Cardiac septum (tissue), 1 donor: ENCODE measurements at regions of chr1 and their contacts with region 1.

Region 1: DNA sequence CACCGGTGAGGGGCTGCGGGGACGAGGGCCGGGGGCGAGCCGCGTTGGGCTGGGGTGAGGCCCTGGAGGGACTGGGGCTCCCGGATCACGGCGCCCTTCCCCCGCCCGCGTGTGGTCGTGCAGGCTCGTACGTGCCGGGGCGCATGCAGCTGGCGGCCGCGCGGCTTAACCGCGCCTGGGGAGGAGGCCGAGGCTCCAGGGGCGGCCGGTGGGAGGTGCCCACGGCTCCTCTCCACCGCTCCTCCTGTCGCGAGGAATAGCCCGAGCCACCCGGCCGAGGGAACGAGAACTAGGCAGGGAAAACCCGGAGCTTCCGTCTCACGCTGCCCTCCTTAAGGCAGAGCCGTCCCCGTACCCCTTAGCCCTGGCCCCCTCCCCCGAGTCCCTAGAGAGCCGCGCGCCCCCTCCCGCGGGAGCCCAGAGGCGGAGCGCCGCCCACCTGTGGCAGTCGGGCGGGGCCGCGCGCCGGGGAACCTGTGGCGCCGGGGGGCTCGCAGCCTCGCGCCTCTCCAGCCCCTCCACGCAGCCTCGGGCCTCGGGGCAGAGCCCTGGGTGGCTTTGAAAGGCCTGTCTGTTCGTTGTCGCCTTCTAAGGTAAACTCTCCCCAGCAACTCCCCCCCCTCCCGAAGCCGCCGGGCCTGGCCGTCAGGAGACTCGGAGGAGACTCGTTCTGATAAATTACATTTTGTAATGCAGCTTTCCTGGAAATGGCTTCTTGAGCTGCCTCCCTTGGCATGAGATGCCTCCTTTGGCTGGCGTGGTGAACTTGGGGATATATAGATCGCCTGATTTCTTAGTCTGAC is 746 bp downstream of the AK4 start:
- DNase-seq: peak; percentile 79

Region 2: DNA sequence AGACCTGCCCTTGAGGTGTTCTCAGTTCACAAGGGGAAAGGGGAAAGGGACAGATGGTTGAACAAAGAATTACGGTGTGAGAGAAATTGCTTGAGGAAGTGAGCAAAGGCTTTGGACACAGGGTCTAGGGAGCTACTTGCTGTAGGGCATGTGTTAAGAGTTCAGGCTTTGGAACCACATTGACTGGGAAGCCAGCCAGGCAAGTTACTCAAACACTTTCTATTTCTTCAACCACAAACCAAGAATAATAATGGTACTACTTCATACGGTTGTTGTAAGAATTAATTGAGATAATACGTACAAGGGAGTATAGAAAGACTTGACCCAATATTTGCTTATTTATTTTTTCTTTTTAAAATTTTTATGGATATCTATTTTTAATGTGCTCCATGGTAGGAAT is 25.8 kb after region 1 on chr1:
- intact Hi-C with region 1: loop called (anchors 2 kb)
- DNase-seq: no peak

Region 3: DNA sequence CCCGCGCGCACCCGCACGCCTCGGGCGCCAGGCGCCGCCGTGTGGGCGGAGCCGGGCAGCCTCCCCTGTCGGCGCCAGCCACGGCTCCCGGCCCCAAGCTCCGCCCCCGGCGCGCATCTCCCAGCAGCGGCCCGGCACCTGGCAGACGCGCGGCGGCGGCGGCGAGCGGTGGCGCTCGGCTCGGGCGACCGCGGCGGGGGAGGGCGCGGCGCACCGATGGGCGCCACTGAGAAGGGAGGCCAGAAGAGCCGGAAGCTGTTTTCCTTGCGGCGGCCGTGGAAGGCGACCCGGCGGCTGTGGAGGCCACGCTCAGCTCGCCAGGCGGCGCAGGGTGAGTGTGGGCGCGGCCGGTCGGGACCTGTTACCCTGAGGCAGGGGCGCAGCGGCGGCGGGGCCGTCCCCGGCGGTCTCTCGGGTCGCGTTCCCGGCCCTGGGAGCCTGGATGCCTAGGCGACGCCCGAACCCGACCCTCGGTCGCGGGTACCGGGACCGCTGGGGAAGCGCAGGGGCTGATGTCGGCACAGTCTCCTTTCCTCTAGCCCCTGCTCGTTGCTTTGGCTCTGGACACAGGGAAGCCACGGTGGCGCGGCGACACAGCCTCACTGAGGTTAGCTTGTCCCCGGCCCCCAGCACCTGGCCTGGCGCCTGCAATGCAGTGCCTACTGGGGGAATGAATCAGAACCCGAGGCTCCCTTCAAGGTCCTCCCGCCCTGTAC is 105.7 kb after region 1 on chr1:
- intact Hi-C with region 1: no loop called
- DNase-seq: peak; percentile 92